ENCODE measurements at regions of chr4 and their contacts with region 1.

Region 1: DNA sequence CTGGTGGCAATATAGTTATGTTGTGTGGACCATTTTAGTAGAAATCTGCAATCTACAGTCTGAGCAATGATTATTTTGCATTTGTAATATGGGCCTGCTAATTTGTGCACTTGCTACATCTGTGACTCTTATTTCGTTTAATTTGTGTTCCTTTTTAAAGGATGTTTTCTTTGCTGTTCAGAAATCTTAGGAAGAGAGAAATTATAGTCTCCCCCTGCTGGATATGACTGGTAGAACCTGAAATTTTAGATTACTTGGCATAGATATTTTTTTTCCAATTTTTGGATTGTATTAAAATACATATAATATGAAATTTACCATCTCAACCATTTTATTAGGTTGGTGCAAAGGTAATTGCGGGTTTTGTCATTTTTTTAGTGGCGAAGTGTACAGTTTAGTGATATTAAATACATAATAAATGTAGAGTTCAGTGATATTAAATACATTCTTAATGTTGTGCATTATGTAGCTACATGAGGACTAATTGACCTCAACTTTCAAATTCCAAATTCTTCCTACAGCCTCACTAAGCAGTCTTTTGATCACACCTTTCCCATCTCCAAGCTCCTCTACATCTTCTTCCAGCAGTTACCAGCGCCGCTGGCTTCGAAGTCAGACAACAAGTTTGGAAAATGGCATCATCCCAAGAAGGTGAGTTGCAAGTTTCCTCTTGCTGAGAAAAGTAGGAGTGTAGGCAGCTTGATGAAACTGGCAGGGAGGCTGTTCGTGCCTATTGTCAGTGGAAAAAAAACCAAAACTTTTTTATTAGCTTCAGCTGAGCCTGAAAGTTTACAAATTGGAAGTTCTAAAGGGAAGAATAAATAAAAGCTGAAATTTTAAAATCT is 82.2 kb downstream of the FNIP2 start:
- DNase-seq: no peak
- ATAC-seq: no peak
- H3K4me3 Mint-ChIP-seq: no peak overlapping the region
- H3K27ac Mint-ChIP-seq: no peak overlapping the region
- H3K4me1 Mint-ChIP-seq: peaks cover 20% of the 10 kb centered on the region
- H3K27me3 Mint-ChIP-seq: no peaks in the 10 kb centered on the region
- CTCF ChIP-seq: peak; percentile 72

Region 2: DNA sequence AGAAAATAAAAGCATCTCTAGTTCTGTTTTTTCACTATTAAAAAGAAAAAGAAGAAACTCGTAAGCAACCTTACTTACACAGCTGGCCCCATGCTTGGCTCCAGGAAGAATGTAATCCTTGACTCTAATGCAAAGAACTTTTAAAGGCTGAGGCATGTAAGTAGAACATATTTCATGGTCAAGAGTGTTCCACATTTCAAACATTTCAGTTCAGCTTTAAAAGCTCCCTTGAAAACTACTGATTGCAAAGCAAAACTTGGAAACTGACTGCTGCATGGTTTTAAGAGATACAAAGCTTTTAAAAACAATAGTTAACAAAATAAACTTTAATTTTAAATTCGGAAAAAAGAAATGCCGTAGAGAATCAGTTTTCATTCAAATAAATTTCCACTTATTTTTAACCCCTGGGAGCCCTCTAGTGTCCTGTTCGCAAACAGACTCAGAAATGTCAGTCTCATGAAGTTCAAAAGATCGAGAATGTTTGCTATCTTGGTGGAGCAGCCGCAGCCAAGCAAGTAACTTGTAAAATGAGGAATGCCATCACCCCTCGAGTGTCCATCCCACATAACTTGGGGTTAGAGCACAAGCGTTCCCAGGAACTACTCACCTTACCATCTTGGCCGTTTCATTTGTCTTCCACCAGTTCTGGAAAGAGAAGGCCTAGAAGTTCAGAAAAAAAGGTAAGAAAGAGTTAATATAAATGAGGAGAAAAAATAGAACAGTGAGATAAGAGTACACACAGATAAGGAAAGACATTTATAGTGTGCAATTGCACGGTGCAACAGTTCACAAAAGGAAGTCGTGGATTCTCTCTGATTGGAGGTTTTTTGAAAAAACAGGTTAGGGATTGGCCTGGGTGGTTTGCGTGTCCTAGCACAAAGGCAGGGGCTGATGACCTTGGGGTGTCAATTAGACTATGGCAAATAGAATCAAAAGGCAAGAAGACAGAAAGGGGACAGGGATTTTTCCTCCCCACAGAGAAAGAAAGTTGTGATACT is 678.5 kb before region 1 on chr4 and contains the start of gene GASK1B:
- CTCF ChIA-PET with region 1: no interaction called
- POLR2A ChIA-PET with region 1: no interaction called
- intact Hi-C with region 1: no loop called
- DNase-seq: peak; percentile 41
- ATAC-seq: no peak
- H3K4me3 Mint-ChIP-seq: no peak within 1 kb of the TSS
- H3K27ac Mint-ChIP-seq: no peak within 1 kb of the TSS
- H3K4me1 Mint-ChIP-seq: no peaks in the 10 kb centered on the region
- H3K27me3 Mint-ChIP-seq: peaks cover 35% of the 10 kb centered on the region
- CTCF ChIP-seq: peak; percentile 54
- total RNA-seq, gene GASK1B: not detected

Region 3: GRCh38 chr4:158729716-158730559 is 121.1 kb before region 1 on chr4:
- CTCF ChIA-PET with region 1: interaction called, 11 read pairs
- POLR2A ChIA-PET with region 1: no interaction called
- intact Hi-C with region 1: loop called (anchors 1 kb)
- DNase-seq: peak; percentile 70
- ATAC-seq: peak; percentile 91
- H3K4me3 Mint-ChIP-seq: no peak overlapping the region
- H3K27ac Mint-ChIP-seq: no peak overlapping the region
- H3K4me1 Mint-ChIP-seq: peaks cover 32% of the 10 kb centered on the region
- H3K27me3 Mint-ChIP-seq: peaks cover 32% of the 10 kb centered on the region
- CTCF ChIP-seq: peak; percentile 73

Region 4: DNA sequence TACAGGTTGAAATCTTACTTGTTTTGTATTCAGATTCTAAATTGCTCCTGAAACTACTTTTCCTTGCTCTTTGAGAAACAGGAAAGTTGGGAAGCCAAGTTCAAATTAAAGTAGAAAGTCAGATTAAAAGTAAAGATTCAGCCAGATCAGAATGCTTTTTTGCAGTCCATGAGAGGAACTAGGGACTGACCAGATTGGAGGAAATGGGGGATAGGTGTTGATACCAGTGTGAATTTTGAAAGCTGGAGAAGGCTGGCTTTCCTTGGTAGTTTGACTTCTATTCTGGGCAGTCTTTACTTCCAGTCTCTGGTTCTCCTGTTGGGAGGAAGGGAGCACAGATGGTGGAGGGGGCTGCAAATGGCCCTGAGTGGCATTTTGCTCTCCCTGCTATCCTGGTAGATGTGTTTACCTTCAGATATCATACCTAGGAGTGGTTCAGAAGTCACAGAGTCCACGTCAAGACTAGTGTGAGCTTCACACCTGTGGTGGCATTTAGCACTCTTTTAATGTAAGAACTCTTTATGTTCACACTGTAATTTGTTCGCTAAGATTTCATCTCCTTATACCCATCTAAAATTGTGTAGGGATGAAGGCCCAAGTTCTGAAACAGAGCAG is 13.4 kb before region 1 on chr4:
- CTCF ChIA-PET with region 1: interaction called, 13 read pairs
- POLR2A ChIA-PET with region 1: no interaction called
- intact Hi-C with region 1: no loop called
- DNase-seq: no peak
- ATAC-seq: no peak
- H3K4me3 Mint-ChIP-seq: no peak overlapping the region
- H3K27ac Mint-ChIP-seq: no peak overlapping the region
- H3K4me1 Mint-ChIP-seq: no peaks in the 10 kb centered on the region
- H3K27me3 Mint-ChIP-seq: no peaks in the 10 kb centered on the region
- CTCF ChIP-seq: no peak

Region 5: GRCh38 chr4:159201168-159201567 is 350.1 kb after region 1 on chr4:
- CTCF ChIA-PET with region 1: interaction called, 34 read pairs
- POLR2A ChIA-PET with region 1: no interaction called
- intact Hi-C with region 1: loop called (anchors 2 kb)
- DNase-seq: no peak
- ATAC-seq: no peak
- H3K4me3 Mint-ChIP-seq: no peak overlapping the region
- H3K27ac Mint-ChIP-seq: no peak overlapping the region
- H3K4me1 Mint-ChIP-seq: peaks cover 27% of the 10 kb centered on the region
- H3K27me3 Mint-ChIP-seq: no peaks in the 10 kb centered on the region
- CTCF ChIP-seq: no peak